Caco-2 (cell line): ENCODE measurements at regions of chr11 and their contacts with region 1.

Region 1: DNA sequence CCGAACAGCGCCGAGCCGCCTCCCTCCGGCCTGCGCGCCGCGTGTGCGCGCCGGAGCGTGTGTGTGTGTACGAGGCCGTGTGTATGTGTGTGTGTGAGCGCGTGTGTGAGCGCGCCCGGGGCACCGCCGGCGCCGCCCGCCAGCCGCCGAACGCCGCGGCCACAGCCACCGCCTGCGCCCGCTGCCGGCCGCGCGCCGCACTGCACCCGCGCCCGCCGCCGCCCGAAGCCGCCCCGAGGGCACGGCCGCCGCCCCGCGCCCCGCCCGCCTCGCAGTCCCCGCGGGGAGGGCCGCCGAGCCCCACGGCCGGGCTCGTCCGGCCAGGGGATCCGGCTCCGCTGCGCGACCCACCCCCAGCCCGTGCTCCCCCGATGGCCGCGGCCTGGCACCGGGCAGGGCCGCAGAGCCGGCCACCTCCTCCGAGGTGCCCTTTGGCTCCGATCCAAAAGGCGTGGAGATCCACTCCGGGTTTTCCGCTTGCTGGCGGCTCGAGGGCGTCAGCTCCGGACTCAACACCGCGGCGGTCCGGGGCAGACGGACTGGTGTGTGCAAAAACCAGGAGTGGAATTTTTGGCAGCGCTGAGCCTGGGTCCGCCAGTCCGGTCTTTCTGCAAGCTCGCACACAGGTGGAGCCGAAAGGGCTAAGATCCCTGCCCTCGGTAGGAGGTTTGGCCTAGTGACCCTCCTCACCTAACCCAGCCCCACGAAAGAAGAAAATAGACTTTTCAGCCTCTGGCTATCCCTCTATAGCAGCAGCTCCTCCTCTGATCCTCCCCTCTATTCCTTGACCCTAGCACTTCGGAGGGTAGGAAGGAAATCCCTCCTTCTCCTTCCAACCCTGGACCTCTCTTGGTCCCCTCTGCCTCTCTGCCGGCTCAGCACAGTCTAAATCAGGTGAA is at the start of gene SYT7:
- DNase-seq: peak; percentile 97 to 100
- H3K4me3 ChIP-seq: peak within 1 kb of the TSS; percentile 80
- H3K4me3 Mint-ChIP-seq: peak within 1 kb of the TSS; percentile 74
- H3K27ac Mint-ChIP-seq: peak within 1 kb of the TSS; percentile 62
- H3K4me1 ChIP-seq: peaks cover 11% of the 10 kb centered on the region
- H3K4me1 Mint-ChIP-seq: peaks cover 21% of the 10 kb centered on the region
- H3K27me3 ChIP-seq: no peaks in the 10 kb centered on the region
- H3K27me3 Mint-ChIP-seq: no peaks in the 10 kb centered on the region
- CTCF ChIP-seq: no peak
- total RNA-seq, gene SYT7: 32.8 and 33.5 TPM in 2 replicates

Region 2: GRCh38 chr11:61403658-61404057 is 177.6 kb before region 1 on chr11:
- CTCF ChIA-PET with region 1: no interaction called
- POLR2A ChIA-PET with region 1: no interaction called
- intact Hi-C with region 1: no loop called
- DNase-seq: no peak
- H3K4me3 ChIP-seq: no peak overlapping the region
- H3K4me3 Mint-ChIP-seq: no peak overlapping the region
- H3K27ac Mint-ChIP-seq: no peak overlapping the region
- H3K4me1 ChIP-seq: no peaks in the 10 kb centered on the region
- H3K4me1 Mint-ChIP-seq: no peaks in the 10 kb centered on the region
- H3K27me3 ChIP-seq: no peaks in the 10 kb centered on the region
- H3K27me3 Mint-ChIP-seq: no peaks in the 10 kb centered on the region
- CTCF ChIP-seq: no peak

Region 3: DNA sequence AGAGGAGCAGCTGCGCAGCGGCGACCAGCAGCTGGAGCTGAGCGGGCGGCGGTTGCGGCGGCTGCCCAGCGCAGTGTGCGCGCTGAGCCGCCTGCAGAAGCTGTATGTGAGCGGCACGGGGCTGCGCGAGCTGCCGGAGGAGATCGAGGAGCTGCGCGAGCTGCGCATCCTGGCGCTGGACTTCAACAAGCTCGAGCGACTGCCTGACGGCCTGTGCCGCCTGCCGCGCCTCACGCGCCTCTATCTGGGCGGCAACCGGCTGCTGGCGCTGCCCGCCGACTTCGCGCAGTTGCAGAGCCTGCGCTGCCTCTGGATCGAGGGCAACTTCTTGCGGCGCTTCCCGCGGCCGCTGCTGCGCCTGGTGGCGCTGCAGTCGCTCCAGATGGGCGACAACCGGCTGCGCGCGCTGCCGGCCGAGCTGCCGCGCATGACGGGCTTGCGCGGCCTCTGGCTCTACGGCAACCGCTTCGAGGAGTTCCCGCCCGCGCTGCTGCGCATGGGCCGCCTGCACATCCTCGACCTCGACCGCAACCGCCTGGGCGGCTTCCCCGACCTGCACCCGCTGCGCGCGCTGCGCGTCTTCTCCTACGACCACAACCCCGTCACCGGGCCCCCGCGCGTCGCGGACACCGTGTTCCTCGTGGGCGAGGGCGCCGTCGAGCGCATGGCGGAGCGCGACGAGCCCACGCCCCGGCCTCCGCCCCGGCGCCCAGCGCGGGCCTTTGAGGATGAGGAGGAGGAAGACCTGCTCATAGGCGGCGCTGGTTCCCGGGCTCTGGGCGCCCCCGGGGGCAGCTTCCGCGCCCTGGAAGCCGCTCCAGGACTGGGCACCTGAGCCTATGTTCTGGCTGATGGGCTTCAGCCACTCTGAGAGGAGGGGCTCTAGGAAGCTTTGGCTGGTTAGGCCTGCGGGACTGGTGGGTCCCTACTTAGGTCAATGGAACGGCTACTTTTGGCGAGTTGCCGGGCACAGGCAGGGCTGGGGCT is 71.9 kb before region 1 on chr11:
- CTCF ChIA-PET with region 1: interaction called, 6 read pairs
- POLR2A ChIA-PET with region 1: no interaction called
- intact Hi-C with region 1: loop called (anchors 2 kb)
- DNase-seq: peak; percentile 82 to 87
- H3K4me3 ChIP-seq: peak overlapping the region; percentile 52
- H3K4me3 Mint-ChIP-seq: peak overlapping the region; percentile 80
- H3K27ac Mint-ChIP-seq: no peak overlapping the region
- H3K4me1 ChIP-seq: peaks cover 37% of the 10 kb centered on the region
- H3K4me1 Mint-ChIP-seq: peaks cover 27% of the 10 kb centered on the region
- H3K27me3 ChIP-seq: no peaks in the 10 kb centered on the region
- H3K27me3 Mint-ChIP-seq: peaks cover 5% of the 10 kb centered on the region
- CTCF ChIP-seq: peak; percentile 59 to 71

Region 4: DNA sequence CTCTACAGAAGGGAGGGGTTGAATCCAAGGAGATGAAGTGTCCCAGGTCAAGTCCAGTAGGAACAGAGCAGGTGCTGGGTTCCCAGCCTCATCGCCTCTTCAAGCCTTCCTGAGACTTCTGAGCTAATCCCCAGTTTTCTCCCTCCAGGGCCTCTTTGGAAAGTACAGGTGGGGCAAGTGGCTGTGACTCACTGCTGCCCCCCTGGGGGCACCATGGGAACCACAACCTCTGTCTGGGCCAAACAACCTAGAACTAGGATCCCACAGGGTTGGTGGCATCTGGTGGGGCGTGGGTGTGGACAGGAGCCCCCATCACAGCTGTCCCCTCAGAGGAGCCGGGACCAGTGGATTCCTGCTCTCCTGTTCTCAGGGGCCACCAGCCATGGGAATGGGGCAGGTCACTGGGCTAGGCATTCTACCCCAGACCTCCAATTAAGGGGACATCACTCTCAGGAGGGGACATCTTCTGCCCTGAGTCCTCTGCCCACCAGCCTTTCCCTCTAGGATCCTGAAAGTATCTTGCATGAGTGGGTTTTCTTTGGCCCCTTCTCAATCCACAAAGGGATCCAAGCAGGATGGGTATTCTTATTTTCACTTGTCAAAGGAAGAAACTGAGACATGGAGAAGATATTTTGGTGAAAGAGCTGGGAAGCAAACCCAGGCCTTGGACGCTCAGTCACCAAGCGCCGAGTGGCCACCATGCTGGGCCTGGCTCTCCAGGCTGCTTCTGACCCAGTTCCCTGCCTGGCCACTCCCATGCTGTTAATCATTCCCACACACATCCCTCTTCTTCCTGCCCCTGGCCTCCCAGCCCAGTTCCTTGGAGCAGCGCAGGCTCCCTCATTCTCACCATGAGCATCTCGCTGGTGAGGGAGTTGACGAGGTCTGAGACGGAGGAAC is 48.9 kb before region 1 on chr11:
- CTCF ChIA-PET with region 1: interaction called, 7 read pairs
- POLR2A ChIA-PET with region 1: no interaction called
- intact Hi-C with region 1: loop called (anchors 2 kb)
- DNase-seq: peak; percentile 67 to 73
- H3K4me3 ChIP-seq: no peak overlapping the region
- H3K4me3 Mint-ChIP-seq: no peak overlapping the region
- H3K27ac Mint-ChIP-seq: no peak overlapping the region
- H3K4me1 ChIP-seq: peaks cover 41% of the 10 kb centered on the region
- H3K4me1 Mint-ChIP-seq: peaks cover 25% of the 10 kb centered on the region
- H3K27me3 ChIP-seq: no peaks in the 10 kb centered on the region
- H3K27me3 Mint-ChIP-seq: no peaks in the 10 kb centered on the region
- CTCF ChIP-seq: peak; percentile 85 to 86

Region 5: DNA sequence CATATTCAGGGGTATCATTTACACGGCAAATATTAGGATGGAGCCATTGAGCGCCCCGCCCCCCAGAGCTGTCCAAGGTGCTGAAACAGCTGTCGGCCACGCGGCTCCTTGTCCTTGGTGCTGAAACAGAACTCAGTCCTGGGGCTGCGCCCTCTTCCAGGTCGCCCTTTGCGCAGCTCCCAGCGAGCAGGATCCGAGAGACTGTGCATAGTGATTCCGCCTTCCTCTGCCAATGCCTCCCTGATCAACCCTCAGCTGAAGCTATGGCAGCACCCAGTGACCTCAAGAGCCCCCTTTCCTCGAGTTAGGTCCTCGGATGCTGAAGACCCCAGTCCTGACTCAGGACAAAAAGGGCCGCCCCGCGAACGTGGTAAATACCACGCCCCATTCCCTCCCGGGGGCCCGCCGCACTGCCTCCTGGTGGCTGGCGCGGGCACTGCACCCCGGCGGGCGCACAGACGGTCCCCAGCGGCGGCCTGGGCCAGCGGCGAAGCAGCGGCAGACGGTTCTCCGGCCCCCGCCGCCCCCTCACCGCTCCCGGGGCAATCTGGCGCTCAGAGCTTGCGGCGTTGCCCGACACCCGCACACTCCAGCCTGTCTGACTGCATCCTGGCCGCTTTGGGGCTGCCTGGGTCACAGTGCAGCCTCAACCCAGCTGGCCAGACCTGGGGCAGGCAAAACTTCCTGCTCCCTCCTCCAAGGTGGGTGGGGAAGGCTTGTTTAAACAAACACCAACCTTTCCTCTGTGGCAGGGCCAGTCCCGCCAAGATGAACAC is 13.8 kb before region 1 on chr11:
- CTCF ChIA-PET with region 1: interaction called, 11 read pairs
- POLR2A ChIA-PET with region 1: no interaction called
- intact Hi-C with region 1: loop called (anchors 1 kb)
- DNase-seq: peak; percentile 86 to 90
- H3K4me3 ChIP-seq: no peak overlapping the region
- H3K4me3 Mint-ChIP-seq: no peak overlapping the region
- H3K27ac Mint-ChIP-seq: no peak overlapping the region
- H3K4me1 ChIP-seq: no peaks in the 10 kb centered on the region
- H3K4me1 Mint-ChIP-seq: no peaks in the 10 kb centered on the region
- H3K27me3 ChIP-seq: no peaks in the 10 kb centered on the region
- H3K27me3 Mint-ChIP-seq: no peaks in the 10 kb centered on the region
- CTCF ChIP-seq: peak; percentile 46 to 77

Region 6: DNA sequence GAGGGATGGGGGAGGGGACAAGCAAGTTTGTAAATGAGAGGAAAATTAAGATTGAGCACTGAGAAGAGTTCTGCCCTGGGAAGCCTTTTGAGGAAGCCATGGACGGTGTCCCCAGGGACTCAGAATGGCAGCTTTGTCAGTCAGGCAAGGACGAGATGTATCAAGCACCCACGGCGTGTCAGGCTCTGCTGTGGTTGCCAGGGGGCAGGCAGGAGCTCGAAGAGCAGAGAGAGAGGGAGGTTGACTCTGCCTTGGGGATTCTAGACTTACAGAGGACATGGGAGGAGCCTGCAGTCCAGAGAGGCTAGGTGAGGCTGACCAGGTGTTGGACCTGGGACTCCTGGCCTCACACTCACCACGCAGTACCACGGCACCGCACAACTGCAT is 28.7 kb after region 1 on chr11:
- CTCF ChIA-PET with region 1: interaction called, 6 read pairs
- POLR2A ChIA-PET with region 1: no interaction called
- intact Hi-C with region 1: loop called (anchors 2 kb)
- DNase-seq: peak; percentile 68 to 71
- H3K4me3 ChIP-seq: no peak overlapping the region
- H3K4me3 Mint-ChIP-seq: peak overlapping the region; percentile 61
- H3K27ac Mint-ChIP-seq: peak overlapping the region; percentile 71
- H3K4me1 ChIP-seq: peaks cover 37% of the 10 kb centered on the region
- H3K4me1 Mint-ChIP-seq: peaks cover 22% of the 10 kb centered on the region
- H3K27me3 ChIP-seq: no peaks in the 10 kb centered on the region
- H3K27me3 Mint-ChIP-seq: no peaks in the 10 kb centered on the region
- CTCF ChIP-seq: peak in 1 of 2 experiments; percentile 25